ENCODE measurements at regions of chr17 and their contacts with region 1.

Region 1: GRCh38 chr17:16363749-16364536 is 10.7 kb upstream of the CENPV start:
- DNase-seq: peak; percentile 43 to 82 (median 75)
- ATAC-seq: peak; percentile 97
- H3K4me3 ChIP-seq: no peak overlapping the region
- H3K4me3 Mint-ChIP-seq: no peak overlapping the region
- H3K27ac ChIP-seq: no peak overlapping the region
- H3K27ac Mint-ChIP-seq: no peak overlapping the region
- H3K4me1 ChIP-seq: no peaks in the 10 kb centered on the region
- H3K4me1 Mint-ChIP-seq: peaks cover 3% of the 10 kb centered on the region
- H3K27me3 ChIP-seq: no peaks in the 10 kb centered on the region
- H3K27me3 Mint-ChIP-seq: no peaks in the 10 kb centered on the region
- CTCF ChIP-seq: peak; percentile 91

Region 2: DNA sequence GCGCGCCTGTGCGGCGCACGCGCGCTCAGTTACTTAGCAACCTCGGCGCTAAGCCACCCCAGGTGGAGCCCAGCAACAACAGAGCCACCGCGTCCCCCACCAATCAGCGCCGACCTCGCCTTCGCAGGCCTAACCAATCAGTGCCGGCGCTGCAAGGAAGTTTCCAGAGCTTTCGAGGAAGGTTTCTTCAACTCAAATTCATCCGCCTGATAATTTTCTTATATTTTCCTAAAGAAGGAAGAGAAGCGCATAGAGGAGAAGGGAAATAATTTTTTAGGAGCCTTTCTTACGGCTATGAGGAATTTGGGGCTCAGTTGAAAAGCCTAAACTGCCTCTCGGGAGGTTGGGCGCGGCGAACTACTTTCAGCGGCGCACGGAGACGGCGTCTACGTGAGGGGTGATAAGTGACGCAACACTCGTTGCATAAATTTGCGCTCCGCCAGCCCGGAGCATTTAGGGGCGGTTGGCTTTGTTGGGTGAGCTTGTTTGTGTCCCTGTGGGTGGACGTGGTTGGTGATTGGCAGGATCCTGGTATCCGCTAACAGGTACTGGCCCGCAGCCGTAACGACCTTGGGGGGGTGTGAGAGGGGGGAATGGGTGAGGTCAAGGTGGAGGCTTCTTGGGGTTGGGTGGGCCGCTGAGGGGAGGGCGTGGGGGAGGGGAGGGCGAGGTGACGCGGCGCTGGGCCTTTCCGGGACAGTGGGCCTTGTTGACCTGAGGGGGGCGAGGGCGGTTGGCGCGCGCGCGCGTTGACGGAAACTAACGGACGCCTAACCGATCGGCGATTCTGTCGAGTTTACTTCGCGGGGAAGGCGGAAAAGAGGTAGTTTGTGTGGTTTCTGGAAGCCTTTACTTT is 16.9 kb after region 1 on chr17 and contains the start of gene UBB:
- CTCF ChIA-PET with region 1: interaction called, 14 read pairs
- POLR2A ChIA-PET with region 1: interaction called, 5 read pairs
- intact Hi-C with region 1: no loop called
- DNase-seq: peak; percentile 88 to 99 (median 94)
- ATAC-seq: peak; percentile 91
- H3K4me3 ChIP-seq: peak within 1 kb of the TSS; percentile 77 to 79
- H3K4me3 Mint-ChIP-seq: peak within 1 kb of the TSS; percentile 85
- H3K27ac ChIP-seq: peak within 1 kb of the TSS; percentile 89 to 99
- H3K27ac Mint-ChIP-seq: peak within 1 kb of the TSS; percentile 96
- H3K4me1 ChIP-seq: peaks cover 29% of the 10 kb centered on the region
- H3K4me1 Mint-ChIP-seq: peaks cover 36% of the 10 kb centered on the region
- H3K27me3 ChIP-seq: no peaks in the 10 kb centered on the region
- H3K27me3 Mint-ChIP-seq: no peaks in the 10 kb centered on the region
- CTCF ChIP-seq: no peak
- total RNA-seq, gene UBB: 829 to 863 TPM

Region 3: DNA sequence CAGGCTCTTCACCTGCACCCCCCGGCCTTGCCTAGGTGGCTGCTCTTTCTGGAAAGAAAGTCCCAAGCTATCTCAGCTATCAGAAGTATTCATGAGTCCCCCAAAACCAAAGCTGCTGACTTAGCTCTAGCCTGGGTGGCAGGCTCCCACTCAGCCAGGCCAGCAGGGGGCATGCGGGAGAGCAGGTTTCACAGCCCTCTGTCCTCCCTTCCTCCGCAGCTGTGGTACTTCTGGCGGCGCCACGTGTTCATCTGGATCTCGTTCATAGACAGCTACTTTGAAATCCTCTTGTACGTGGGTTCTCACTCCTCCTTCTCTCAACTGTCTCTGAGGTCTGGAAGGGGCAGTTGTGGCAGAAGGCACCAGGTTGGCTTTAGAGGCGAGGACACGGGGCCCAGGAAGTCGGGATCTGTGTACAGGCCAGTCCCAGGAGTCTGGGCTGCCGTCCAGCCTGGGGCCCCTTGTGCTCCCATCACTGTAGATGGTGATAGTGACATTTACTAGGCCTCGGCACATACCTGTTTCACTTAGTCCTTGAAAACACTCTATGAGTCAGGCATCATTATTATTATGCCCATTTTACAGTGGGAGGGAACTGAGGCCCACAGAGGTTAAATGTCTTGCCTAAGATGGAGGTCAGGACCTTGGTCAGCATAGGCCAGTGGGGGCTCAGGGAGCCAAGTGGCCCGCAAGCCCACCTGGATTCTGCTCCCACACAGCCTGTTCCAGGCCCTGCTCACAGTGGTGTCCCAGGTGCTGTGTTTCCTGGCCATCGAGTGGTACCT is 64.3 kb after region 1 on chr17:
- CTCF ChIA-PET with region 1: interaction called, 11 read pairs
- POLR2A ChIA-PET with region 1: no interaction called
- intact Hi-C with region 1: no loop called
- DNase-seq: peak in 6 of 9 experiments; percentile 18 to 59 (median 52)
- ATAC-seq: peak; percentile 91
- H3K4me3 ChIP-seq: no peak overlapping the region
- H3K4me3 Mint-ChIP-seq: no peak overlapping the region
- H3K27ac ChIP-seq: no peak overlapping the region
- H3K27ac Mint-ChIP-seq: no peak overlapping the region
- H3K4me1 ChIP-seq: no peaks in the 10 kb centered on the region
- H3K4me1 Mint-ChIP-seq: peaks cover 2% of the 10 kb centered on the region
- H3K27me3 ChIP-seq: no peaks in the 10 kb centered on the region
- H3K27me3 Mint-ChIP-seq: no peaks in the 10 kb centered on the region
- CTCF ChIP-seq: peak; percentile 51

Region 4: GRCh38 chr17:16521070-16521727 is 157.3 kb after region 1 on chr17:
- CTCF ChIA-PET with region 1: interaction called, 53 read pairs
- POLR2A ChIA-PET with region 1: interaction called, 3 read pairs
- intact Hi-C with region 1: loop called in 1 of 2 experiments (anchors 1 kb)
- DNase-seq: peak; percentile 34 to 86 (median 65)
- ATAC-seq: peak; percentile 96
- H3K4me3 ChIP-seq: no peak overlapping the region
- H3K4me3 Mint-ChIP-seq: no peak overlapping the region
- H3K27ac ChIP-seq: no peak overlapping the region
- H3K27ac Mint-ChIP-seq: no peak overlapping the region
- H3K4me1 ChIP-seq: no peaks in the 10 kb centered on the region
- H3K4me1 Mint-ChIP-seq: peaks cover 3% of the 10 kb centered on the region
- H3K27me3 ChIP-seq: peaks cover 0 to 2% of the 10 kb centered on the region in 2 experiments
- H3K27me3 Mint-ChIP-seq: peaks cover 36% of the 10 kb centered on the region
- CTCF ChIP-seq: peak; percentile 93

Region 5: GRCh38 chr17:16589097-16589969 is 225.4 kb after region 1 on chr17:
- CTCF ChIA-PET with region 1: interaction called, 3 read pairs
- POLR2A ChIA-PET with region 1: no interaction called
- intact Hi-C with region 1: loop called in 1 of 2 experiments (anchors 5 kb)
- DNase-seq: peak; percentile 81 to 96 (median 92)
- ATAC-seq: peak; percentile 94
- H3K4me3 ChIP-seq: peak overlapping the region; percentile 62 to 65
- H3K4me3 Mint-ChIP-seq: peak overlapping the region; percentile 79
- H3K27ac ChIP-seq: no peak overlapping the region
- H3K27ac Mint-ChIP-seq: no peak overlapping the region
- H3K4me1 ChIP-seq: peaks cover 12% of the 10 kb centered on the region
- H3K4me1 Mint-ChIP-seq: peaks cover 16% of the 10 kb centered on the region
- H3K27me3 ChIP-seq: no peaks in the 10 kb centered on the region
- H3K27me3 Mint-ChIP-seq: peaks cover 33% of the 10 kb centered on the region
- CTCF ChIP-seq: peak; percentile 95